OCI-LY7 (cell line): ENCODE measurements at regions of chr1 and their contacts with region 1.

Region 1: DNA sequence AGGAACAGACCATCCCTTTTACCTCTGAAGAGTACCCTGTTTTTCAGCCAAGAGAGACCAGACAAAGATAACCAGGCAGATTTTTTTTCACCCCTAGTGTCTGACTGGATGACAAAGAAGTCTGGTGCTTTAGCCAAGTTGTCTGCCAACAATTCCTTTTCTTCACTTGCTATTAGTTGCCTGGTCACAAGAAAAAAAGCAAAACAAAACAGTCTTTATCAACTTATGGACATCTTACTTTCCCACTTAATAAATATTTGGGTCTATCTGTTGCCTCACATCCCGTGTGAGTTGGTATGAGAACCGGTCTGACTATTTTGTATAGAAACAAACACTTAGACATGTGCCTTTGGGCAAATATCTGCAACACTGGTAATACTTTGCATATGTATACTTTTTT is 662.9 kb downstream of the PLPP3 start:
- DNase-seq: no peak
- H3K4me3 ChIP-seq: no peak overlapping the region
- H3K27ac ChIP-seq: no peak overlapping the region
- H3K4me1 ChIP-seq: no peaks in the 10 kb centered on the region
- CTCF ChIP-seq: no peak

Region 2: DNA sequence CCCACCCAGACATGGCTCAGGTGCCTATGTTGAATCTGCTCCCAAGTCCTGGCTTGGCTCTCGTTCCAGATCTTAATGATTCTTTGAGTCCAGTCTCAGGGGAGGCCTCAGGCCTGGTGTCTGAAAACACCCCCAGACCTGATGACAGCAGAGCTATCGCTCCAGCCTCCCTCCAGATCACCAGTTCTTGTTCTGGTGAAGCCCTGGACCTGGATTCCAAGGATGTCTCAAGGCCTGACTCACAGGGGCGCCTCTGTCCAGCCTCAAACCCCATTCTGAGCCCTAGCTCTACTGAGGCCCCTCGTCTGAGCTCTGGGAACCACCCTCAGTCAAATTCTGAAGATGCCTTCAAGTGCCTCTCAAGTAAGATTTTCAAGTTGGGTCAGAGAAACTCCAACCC is 1263.4 kb before region 1 on chr1:
- CTCF ChIA-PET with region 1: no interaction called
- POLR2A ChIA-PET with region 1: interaction called, 12 read pairs
- intact Hi-C with region 1: no loop called
- DNase-seq: no peak
- H3K4me3 ChIP-seq: no peak overlapping the region
- H3K27ac ChIP-seq: no peak overlapping the region
- H3K4me1 ChIP-seq: no peaks in the 10 kb centered on the region
- CTCF ChIP-seq: no peak